CD8-positive, alpha-beta T cell (primary cell): ENCODE measurements at regions of chr4 and their contacts with region 1.

Region 1: GRCh38 chr4:8158710-8159536 is at the start of gene ABLIM2:
- DNase-seq: peak; percentile 97 to 100 (median 99)
- ATAC-seq: peak; percentile 99
- H3K4me3 ChIP-seq: peak within 1 kb of the TSS; percentile 90 to 97
- H3K4me3 Mint-ChIP-seq: peak within 1 kb of the TSS; percentile 89
- H3K27ac ChIP-seq: peak within 1 kb of the TSS; percentile 48 to 56
- H3K27ac Mint-ChIP-seq: peak within 1 kb of the TSS; percentile 72
- H3K4me1 ChIP-seq: peaks cover 18% of the 10 kb centered on the region
- H3K4me1 Mint-ChIP-seq: peaks cover 16% of the 10 kb centered on the region
- H3K27me3 ChIP-seq: peaks cover 0 to 6% of the 10 kb centered on the region in 2 experiments
- H3K27me3 Mint-ChIP-seq: no peaks in the 10 kb centered on the region
- CTCF ChIP-seq: no peak
- total RNA-seq, gene ABLIM2: 1.2 to 1.6 TPM

Region 2: GRCh38 chr4:7761720-7762119 is 397.2 kb before region 1 on chr4:
- CTCF ChIA-PET with region 1: no interaction called
- POLR2A ChIA-PET with region 1: no interaction called
- intact Hi-C with region 1: loop called (anchors 2 to 5 kb)
- DNase-seq: peak; percentile 24 to 73 (median 55)
- ATAC-seq: peak; percentile 64
- H3K4me3 ChIP-seq: no peak overlapping the region
- H3K4me3 Mint-ChIP-seq: peak overlapping the region; percentile 8
- H3K27ac ChIP-seq: peak overlapping the region in 1 of 2 experiments; percentile 31
- H3K27ac Mint-ChIP-seq: peak overlapping the region; percentile 84
- H3K4me1 ChIP-seq: peaks cover 35% of the 10 kb centered on the region
- H3K4me1 Mint-ChIP-seq: peaks cover 32% of the 10 kb centered on the region
- H3K27me3 ChIP-seq: no peaks in the 10 kb centered on the region
- H3K27me3 Mint-ChIP-seq: no peaks in the 10 kb centered on the region
- CTCF ChIP-seq: peak; percentile 51

Region 3: GRCh38 chr4:8198906-8199593 is 40.1 kb after region 1 on chr4 and contains the start of gene SH3TC1:
- CTCF ChIA-PET with region 1: no interaction called
- POLR2A ChIA-PET with region 1: interaction called, 4 read pairs
- intact Hi-C with region 1: loop called (anchors 1 to 2 kb)
- DNase-seq: peak; percentile 19 to 83 (median 59)
- ATAC-seq: peak; percentile 52
- H3K4me3 ChIP-seq: peak within 1 kb of the TSS; percentile 63 to 69
- H3K4me3 Mint-ChIP-seq: peak within 1 kb of the TSS; percentile 97
- H3K27ac ChIP-seq: peak within 1 kb of the TSS; percentile 43 to 61
- H3K27ac Mint-ChIP-seq: peak within 1 kb of the TSS; percentile 97
- H3K4me1 ChIP-seq: peaks cover 47% of the 10 kb centered on the region
- H3K4me1 Mint-ChIP-seq: peaks cover 45% of the 10 kb centered on the region
- H3K27me3 ChIP-seq: no peaks in the 10 kb centered on the region
- H3K27me3 Mint-ChIP-seq: no peaks in the 10 kb centered on the region
- CTCF ChIP-seq: no peak
- total RNA-seq, gene SH3TC1: 90.7 to 102 TPM

Region 4: DNA sequence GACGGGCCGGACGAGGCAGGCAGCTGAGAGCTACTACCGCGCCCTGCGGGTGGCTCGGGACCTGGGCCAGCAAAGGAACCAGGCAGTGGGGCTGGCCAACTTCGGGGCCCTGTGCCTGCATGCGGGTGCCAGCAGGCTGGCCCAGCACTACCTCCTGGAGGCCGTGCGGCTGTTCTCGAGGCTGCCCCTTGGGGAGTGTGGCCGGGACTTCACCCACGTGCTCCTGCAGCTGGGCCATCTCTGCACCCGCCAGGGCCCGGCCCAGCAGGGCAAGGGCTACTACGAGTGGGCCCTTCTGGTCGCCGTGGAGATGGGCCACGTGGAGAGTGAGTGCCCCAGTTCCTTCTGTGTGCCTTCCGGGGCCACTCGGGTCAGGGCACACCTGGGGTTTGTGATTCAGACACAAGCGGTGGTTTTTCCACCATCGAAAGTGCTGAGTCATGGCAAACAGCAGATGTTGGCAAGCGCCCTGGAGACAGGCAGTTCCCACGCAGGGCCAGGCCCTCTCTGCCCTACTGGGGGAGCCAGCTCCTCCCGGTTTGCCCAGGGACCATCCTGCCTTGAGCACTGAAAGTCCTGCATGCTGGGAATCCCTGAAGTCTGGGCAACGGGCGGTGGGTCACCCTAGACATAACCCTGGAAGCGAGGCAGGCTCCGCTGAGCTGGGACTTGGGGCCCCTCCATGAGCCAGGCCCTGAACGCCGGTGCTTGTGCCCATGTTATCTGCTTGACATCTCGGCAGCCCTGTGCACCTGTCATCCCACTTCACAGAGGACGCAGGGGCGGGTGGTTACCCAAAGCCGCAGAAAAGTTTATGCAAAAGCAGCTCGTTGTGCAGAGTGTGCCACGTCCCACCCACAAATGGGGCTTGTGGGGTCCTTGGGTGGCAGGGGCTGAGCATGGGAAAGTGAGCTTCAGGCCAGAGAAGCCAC is 69.7 kb after region 1 on chr4:
- CTCF ChIA-PET with region 1: no interaction called
- POLR2A ChIA-PET with region 1: interaction called, 4 read pairs
- intact Hi-C with region 1: loop called (anchors 2 kb)
- DNase-seq: peak; percentile 47 to 90 (median 71)
- ATAC-seq: peak; percentile 80
- H3K4me3 ChIP-seq: peak overlapping the region; percentile 8 to 18
- H3K4me3 Mint-ChIP-seq: peak overlapping the region; percentile 65
- H3K27ac ChIP-seq: peak overlapping the region; percentile 6 to 16
- H3K27ac Mint-ChIP-seq: peak overlapping the region; percentile 90
- H3K4me1 ChIP-seq: peaks cover 59% of the 10 kb centered on the region
- H3K4me1 Mint-ChIP-seq: peaks cover 63% of the 10 kb centered on the region
- H3K27me3 ChIP-seq: peaks cover 0 to 2% of the 10 kb centered on the region in 2 experiments
- H3K27me3 Mint-ChIP-seq: no peaks in the 10 kb centered on the region
- CTCF ChIP-seq: no peak

Region 5: DNA sequence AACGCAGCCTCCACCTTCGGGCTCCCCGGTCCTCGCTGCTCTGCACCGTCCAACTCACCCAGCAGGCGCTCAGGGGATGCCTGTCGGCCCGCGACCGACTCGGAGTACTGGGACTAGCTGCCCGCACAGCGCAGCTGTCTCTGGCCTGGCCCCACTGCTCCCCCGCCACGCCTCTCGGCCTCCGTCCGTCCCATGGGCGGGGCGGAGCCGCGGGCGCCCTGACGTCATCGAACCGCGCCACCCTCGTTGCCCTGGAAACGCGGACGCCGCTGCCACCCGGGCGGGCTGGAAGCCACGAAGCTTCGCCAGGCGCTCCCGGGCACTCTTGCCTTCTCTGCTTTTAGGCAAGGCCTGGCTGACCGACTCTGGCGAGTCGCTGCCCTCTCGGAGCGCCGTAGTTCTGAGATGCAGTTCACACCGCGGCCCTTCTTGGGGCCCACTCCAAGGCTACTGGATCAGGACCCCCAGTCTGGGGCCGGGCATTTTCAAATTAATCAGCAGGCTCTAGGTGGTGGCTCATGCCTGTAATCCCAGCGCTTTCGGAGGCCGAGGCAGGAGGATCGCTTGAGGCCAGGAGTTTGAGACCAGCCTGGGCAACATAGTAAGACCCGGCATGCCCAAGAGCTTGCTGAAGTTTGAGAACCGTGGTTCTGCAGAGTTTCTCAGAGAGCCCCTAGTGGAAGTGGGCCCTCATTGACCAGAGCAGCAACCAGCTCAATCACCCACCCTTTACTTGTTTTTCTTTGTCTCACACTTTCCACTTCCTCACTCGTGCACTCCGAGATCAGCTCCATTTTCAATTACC is 269.6 kb after region 1 on chr4:
- CTCF ChIA-PET with region 1: no interaction called
- POLR2A ChIA-PET with region 1: interaction called, 7 read pairs
- intact Hi-C with region 1: loop called (anchors 1 kb)
- DNase-seq: peak; percentile 84 to 98 (median 92)
- ATAC-seq: peak; percentile 91
- H3K4me3 ChIP-seq: peak overlapping the region; percentile 66 to 82
- H3K4me3 Mint-ChIP-seq: peak overlapping the region; percentile 95
- H3K27ac ChIP-seq: peak overlapping the region; percentile 40 to 71
- H3K27ac Mint-ChIP-seq: peak overlapping the region; percentile 94
- H3K4me1 ChIP-seq: peaks cover 14% of the 10 kb centered on the region
- H3K4me1 Mint-ChIP-seq: peaks cover 32% of the 10 kb centered on the region
- H3K27me3 ChIP-seq: no peaks in the 10 kb centered on the region
- H3K27me3 Mint-ChIP-seq: no peaks in the 10 kb centered on the region
- CTCF ChIP-seq: no peak

Region 6: DNA sequence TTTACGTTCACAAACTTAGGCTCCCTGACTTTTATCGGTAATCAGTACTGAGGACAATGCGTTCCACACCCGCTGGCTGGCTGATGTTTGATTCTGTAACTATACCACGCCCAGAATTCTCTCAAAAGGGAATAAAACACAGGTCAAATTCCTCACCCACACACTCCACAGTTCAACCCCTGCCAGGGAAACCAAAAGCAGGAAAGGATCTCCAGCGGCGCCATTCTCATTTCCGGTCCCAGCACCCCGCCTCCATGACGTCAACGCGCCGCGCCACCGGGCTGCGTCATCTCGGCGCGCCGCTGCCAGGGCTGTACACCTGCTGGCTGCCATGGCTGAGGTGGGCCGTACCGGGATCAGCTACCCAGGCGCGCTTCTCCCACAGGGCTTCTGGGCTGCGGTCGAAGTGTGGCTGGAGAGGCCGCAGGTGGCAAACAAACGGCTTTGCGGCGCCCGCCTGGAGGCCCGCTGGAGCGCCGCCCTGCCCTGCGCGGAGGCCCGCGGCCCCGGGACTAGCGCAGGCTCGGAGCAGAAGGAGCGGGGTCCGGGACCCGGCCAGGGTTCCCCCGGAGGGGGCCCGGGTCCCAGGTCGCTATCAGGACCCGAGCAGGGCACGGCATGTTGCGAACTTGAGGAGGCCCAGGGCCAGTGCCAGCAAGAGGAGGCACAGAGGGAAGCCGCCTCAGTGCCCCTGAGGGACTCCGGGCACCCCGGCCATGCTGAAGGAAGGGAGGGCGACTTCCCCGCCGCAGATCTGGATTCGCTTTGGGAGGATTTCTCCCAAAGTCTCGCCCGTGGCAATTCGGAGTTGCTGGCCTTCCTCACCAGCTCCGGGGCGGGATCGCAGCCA is 281.8 kb after region 1 on chr4 and contains the starts of genes ACOX3 and TRMT44:
- CTCF ChIA-PET with region 1: no interaction called
- POLR2A ChIA-PET with region 1: no interaction called
- intact Hi-C with region 1: loop called (anchors 1 kb)
- DNase-seq: peak; percentile 90 to 99 (median 95)
- ATAC-seq: peak; percentile 89
- H3K4me3 ChIP-seq: peak within 1 kb of the TSS; percentile 86 to 98
- H3K4me3 Mint-ChIP-seq: peak within 1 kb of the TSS; percentile 100
- H3K27ac ChIP-seq: peak within 1 kb of the TSS; percentile 98
- H3K27ac Mint-ChIP-seq: peak within 1 kb of the TSS; percentile 100
- H3K4me1 ChIP-seq: peaks cover 47% of the 10 kb centered on the region
- H3K4me1 Mint-ChIP-seq: peaks cover 79% of the 10 kb centered on the region
- H3K27me3 ChIP-seq: no peaks in the 10 kb centered on the region
- H3K27me3 Mint-ChIP-seq: no peaks in the 10 kb centered on the region
- CTCF ChIP-seq: no peak
- total RNA-seq, gene ACOX3: 5.3 to 5.8 TPM
- total RNA-seq, gene TRMT44: 34.9 to 44.2 TPM

Region 7: DNA sequence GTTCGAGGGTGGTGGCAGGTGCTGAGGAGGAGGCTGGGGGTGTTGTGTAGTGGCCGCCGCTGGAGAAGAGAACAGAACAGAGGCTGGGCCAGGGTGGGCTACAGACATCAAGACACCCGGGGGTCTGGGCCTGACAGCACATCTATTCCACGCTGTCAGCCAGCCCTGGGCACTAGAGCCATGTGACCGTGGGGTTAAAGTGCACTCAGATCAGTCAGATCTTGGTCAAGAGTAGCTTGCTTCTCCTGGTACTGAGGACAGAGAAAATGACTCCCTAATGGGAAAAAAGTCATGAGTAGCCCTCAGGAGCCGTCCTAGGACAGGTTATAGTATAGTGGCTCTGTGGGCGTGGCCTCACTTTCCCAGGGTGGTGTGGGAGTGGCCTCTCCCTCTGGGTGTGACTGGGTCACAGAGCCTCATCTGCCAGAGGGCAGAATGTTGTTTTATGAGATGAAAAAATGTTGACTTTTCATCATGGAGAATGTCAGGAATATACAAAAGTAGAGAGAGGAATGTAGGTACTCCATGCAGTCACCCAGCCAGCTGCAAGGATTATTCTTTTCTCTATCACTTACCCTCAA is 301.0 kb after region 1 on chr4:
- CTCF ChIA-PET with region 1: no interaction called
- POLR2A ChIA-PET with region 1: no interaction called
- intact Hi-C with region 1: no loop called
- DNase-seq: no peak
- ATAC-seq: no peak
- H3K4me3 ChIP-seq: no peak overlapping the region
- H3K4me3 Mint-ChIP-seq: no peak overlapping the region
- H3K27ac ChIP-seq: no peak overlapping the region
- H3K27ac Mint-ChIP-seq: no peak overlapping the region
- H3K4me1 ChIP-seq: no peaks in the 10 kb centered on the region
- H3K4me1 Mint-ChIP-seq: no peaks in the 10 kb centered on the region
- H3K27me3 ChIP-seq: no peaks in the 10 kb centered on the region
- H3K27me3 Mint-ChIP-seq: no peaks in the 10 kb centered on the region
- CTCF ChIP-seq: no peak